Breast epithelium (tissue), 4 donors: ENCODE measurements at regions of chr1 and their contacts with region 1.

Region 1: DNA sequence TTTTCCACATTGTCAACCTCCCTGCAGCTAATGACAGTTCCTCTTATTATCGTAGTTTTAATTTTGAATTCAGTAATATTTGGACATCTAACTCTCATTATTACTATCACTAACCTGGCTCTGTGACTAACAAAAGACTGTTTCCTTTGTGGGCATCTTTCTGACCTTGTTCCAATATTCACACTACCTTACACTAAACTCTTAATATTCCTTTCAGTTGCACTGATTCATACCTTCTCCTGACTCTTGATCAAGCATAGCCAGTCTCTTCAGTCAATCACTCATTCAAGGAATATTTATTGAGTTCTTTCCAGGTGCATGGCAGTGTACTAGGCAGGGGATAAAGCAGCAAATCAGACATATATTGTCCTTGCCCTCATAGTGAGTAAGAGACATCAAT is 7.8 kb upstream of the CTNNBIP1 start:
- DNase-seq: no peak
- H3K4me3 ChIP-seq: no peak overlapping the region
- H3K27ac ChIP-seq: no peak overlapping the region
- H3K4me1 ChIP-seq: no peaks in the 10 kb centered on the region
- H3K27me3 ChIP-seq: no peaks in the 10 kb centered on the region
- CTCF ChIP-seq: no peak
- POLR2A ChIP-seq: no peak

Region 2: GRCh38 chr1:8194481-8195233 is 1723.2 kb before region 1 on chr1:
- intact Hi-C with region 1: no loop called
- DNase-seq: no peak
- H3K4me3 ChIP-seq: no peak overlapping the region
- H3K27ac ChIP-seq: peak overlapping the region in 1 of 2 donors; percentile 48
- H3K4me1 ChIP-seq: peaks cover 0 to 5% of the 10 kb centered on the region in 2 donors
- H3K27me3 ChIP-seq: no peaks in the 10 kb centered on the region
- CTCF ChIP-seq: no peak
- POLR2A ChIP-seq: no peak

Region 3: GRCh38 chr1:8671306-8671917 is 1246.5 kb before region 1 on chr1:
- intact Hi-C with region 1: no loop called
- DNase-seq: no peak
- H3K4me3 ChIP-seq: no peak overlapping the region
- H3K27ac ChIP-seq: no peak overlapping the region
- H3K4me1 ChIP-seq: no peaks in the 10 kb centered on the region
- H3K27me3 ChIP-seq: no peaks in the 10 kb centered on the region
- CTCF ChIP-seq: peak; percentile 47 to 83 (median 60)
- POLR2A ChIP-seq: no peak

Region 4: DNA sequence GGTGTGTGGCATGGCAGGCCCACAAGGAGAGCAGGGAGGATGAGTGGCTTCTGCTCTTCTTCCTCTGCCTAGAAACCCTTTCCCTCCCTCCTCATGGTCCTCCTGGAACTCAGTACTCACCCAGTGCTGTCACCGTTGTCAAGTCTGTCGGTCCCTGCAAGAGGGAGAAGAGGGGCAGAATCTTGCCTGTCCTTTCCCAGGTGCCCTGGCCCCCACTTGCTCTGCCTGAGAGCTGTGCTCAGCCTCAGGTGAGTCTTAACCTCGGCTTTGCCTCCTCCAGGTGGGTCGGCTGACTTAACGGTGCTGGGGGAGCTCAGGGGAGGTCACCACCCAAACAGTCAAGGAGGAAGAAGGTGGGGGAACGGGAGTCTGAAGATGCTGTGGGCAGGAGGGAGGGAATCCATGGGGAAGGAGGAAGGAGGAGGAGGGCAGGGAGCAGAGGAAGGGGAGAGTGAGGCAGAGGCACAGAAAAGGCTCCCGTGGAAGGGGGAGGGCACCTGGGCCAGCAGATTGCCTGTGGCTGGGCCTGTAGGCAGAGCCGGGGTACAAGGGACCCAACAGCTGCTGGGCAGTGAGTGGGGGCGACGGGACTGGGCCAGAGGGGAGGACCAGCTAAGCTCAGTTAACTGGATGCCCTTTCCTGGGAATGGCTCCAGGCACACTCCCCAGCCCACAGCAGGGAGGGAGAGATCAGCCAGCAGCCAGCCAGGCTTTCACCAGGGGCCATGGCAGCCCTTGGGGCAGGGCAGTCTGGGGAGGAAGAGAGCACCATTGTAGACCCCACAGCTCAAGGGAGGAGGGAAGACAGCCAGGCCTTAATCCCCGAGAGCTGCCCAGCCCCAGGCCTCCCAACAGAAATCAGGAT is 34.1 kb before region 1 on chr1:
- intact Hi-C with region 1: loop called (anchors 2 kb)
- DNase-seq: no peak
- H3K4me3 ChIP-seq: no peak overlapping the region
- H3K27ac ChIP-seq: peak overlapping the region in 1 of 2 donors; percentile 25
- H3K4me1 ChIP-seq: no peaks in the 10 kb centered on the region
- H3K27me3 ChIP-seq: no peaks in the 10 kb centered on the region
- CTCF ChIP-seq: no peak
- POLR2A ChIP-seq: no peak